AG04449 (cell line): ENCODE measurements at regions of chr1 and their contacts with region 1.

Region 1: GRCh38 chr1:17808816-17809215 is 53.7 kb downstream of the ACTL8 start:
- DNase-seq: no peak
- H3K4me3 ChIP-seq: no peak overlapping the region
- CTCF ChIP-seq: no peak

Region 2: DNA sequence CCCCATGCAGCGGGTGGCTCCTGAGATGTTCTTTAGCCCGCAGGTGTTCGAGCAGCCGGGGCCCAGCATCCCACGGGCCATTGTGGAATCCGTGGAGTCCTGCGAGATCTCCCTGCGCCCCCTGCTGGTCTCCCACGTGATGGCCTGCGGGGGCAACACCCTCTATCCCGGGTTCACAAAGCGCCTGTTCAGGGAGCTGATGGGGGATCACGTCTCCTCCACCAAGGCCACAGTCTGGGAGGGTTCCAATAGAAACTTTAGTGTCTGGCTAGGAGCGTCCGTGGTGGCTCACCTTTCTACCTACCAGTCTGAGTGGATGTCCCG is 17.3 kb after region 1 on chr1:
- CTCF ChIA-PET with region 1: interaction called, 10 read pairs
- POLR2A ChIA-PET with region 1: no interaction called
- DNase-seq: no peak
- H3K4me3 ChIP-seq: no peak overlapping the region
- CTCF ChIP-seq: peak; percentile 83

Region 3: GRCh38 chr1:18032172-18032859 is 223.5 kb after region 1 on chr1:
- CTCF ChIA-PET with region 1: no interaction called
- POLR2A ChIA-PET with region 1: no interaction called
- DNase-seq: no peak
- H3K4me3 ChIP-seq: no peak overlapping the region
- CTCF ChIP-seq: no peak